Motor neuron (in vitro differentiated cells): ENCODE measurements at regions of chr6 and their contacts with region 1.

Region 1: DNA sequence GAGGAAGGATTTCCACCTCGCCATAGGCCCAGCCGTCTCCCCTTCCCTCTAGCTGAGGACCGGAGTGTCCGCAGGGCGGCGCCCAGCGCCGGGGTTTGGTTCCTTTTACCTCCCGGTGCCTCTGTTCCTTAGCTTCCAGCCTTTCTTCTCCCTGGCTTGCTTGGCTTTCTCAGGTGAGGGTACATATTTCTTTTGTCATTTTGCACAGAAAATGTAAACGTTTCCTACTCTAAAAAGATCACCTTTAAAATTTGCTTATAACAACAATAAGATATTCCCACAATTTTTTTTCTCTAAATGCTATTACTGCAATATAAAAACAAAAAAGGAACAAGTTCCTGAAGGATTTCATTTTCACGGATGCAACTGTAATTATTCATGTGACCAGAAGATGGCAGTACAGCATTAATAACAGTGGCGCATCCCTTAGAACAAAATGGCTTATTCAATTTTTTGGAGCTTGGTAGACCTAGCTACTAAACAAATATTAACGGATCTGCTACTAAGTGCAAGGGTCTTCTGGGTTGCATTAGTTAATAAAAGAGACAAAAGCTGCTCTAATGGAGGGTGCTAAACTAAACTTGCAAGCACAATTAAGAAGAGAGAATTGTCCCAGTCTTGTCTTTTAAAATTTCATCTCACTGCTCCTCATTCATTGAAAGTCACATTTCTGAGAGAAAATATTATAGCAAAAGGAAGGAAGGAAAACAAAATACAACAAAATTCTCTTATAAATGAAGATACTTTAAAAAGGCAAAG is 172.9 kb downstream of the ADGRG6 start:
- ATAC-seq: peak in 5 of 8 experiments; percentile 27 to 83 (median 45)
- H3K4me3 ChIP-seq: no peak overlapping the region
- H3K27ac ChIP-seq: no peak overlapping the region
- H3K4me1 ChIP-seq: no peaks in the 10 kb centered on the region

Region 2: DNA sequence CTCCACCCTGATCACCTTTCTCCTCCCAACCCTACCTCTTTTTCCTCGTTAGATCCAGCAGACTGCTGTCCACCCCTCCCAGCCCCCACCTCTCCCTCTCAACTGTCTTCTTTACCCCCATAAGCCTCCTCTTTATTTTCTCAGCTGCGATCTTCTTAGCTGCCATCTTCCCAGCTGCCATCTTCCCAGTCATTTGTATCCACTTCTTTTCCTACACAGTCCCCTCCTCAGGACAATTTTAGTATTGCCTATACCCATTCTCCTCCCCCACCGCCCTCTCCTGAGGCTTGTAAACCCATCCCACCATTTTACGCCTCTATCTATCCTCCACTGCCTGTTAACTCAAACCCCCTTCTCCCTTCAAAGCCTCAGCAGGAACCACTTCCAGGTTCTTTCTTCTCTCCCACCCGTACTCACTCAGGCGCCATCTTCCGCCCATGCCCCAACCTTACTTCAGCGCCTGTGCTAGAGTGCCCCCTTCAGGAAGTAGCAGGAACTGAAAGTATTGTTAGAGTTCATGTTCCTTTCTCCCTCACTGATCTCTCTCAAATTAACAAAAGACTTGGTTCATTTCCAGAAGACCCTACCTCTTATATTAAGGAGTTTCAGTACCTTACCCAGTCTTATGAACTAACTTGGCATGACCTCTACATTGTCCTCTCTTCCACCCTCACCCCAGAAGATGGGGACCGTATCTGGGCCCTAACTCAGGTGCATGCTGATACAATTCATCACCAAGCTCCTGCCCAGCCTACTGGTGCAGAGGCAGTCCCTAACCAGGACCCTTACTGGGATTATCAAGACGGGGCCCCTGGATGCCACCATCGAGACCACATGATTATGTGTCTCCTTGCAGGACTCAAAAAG is 63.1 kb after region 1 on chr6:
- in situ Hi-C with region 1: loop called in 1 of 9 experiments (anchors 10 kb)
- ATAC-seq: peak in 1 of 8 experiments; percentile 46
- H3K4me3 ChIP-seq: no peak overlapping the region
- H3K27ac ChIP-seq: no peak overlapping the region
- H3K4me1 ChIP-seq: no peaks in the 10 kb centered on the region

Region 3: DNA sequence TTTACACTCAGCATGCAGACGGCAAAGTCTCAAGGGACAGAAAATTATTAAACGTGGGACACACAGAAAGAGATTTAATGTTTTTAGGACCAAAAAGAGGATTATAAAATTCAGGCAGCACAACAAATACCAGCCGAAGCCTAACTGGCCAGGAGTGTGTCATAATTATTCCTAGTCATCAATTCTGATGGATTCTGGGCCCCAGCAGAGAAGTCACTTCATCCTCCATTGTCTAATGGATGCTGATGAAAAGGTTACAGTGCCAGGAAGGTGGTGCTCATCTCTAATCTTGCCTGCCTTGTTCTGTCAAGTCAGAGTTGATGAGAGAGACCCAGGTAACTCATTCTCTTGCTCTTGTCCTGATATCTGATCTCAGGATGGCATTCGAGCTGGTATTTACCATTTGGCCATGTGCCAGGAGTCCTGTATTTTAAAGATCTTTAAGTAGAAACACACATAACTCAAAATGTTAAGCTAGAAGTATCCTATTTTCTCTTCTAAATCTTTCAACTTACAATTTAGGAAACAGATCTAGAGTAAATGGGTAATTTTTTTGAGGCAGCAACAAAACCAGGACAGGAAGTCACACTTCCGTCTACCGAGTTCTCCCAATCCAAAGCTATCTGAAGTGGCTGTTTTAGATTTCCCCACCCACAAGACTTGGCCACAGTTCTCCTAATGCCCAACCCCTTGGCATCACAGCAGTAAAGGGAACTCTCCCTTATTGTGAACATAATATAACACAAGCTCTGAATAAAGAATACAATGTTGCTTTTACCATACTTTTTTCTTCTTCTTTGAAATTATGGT is 925.8 kb after region 1 on chr6:
- in situ Hi-C with region 1: loop called in 1 of 9 experiments (anchors 25 kb)
- ATAC-seq: no peak
- H3K4me3 ChIP-seq: no peak overlapping the region
- H3K27ac ChIP-seq: no peak overlapping the region
- H3K4me1 ChIP-seq: peaks cover 6 to 19% of the 10 kb centered on the region in 2 donors